MCF 10A (cell line): ENCODE measurements at regions of chr5 and their contacts with region 1.

Region 1: GRCh38 chr5:143968011-143968878 is 156.3 kb downstream of the HMHB1 start:
- DNase-seq: peak; percentile 80
- H3K4me3 Mint-ChIP-seq: no peak overlapping the region
- H3K27ac Mint-ChIP-seq: no peak overlapping the region
- H3K4me1 Mint-ChIP-seq: peaks cover 24% of the 10 kb centered on the region
- H3K27me3 Mint-ChIP-seq: no peaks in the 10 kb centered on the region
- CTCF ChIP-seq: peak; percentile 76

Region 2: DNA sequence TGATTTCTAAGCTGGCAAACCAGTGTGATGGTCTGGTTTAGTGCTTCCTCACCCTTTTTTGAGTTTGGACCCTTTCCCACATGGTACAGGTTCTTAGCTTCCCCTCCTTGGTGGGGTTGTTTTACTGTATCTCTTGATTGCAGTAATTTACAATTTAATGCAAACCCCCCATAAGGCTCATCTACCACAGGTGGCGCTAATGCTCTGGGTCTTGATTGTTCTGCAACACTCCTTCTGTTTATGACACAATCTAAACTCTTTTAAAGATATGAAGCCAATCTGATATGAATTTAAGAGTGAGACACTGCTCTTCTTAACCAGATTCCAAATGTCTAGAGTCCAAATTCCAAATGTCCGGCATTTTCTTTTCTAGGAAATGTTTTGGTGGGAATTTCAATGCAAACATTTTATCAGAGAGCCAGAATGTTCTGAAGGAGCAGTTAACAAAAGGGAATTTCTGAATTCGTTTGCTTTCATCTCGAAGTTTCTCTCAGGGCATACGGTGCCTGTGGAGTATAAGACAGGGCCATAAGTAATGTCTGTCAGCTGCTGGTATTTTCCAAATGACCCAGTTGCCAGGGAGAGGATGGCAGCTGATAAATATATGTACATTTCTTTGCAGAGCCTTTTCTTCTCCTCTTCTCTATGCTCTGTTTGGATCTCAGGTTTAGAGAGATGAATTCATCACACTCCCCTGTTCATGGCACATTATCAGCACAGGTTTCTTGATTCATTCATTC is 951.3 kb before region 1 on chr5:
- CTCF ChIA-PET with region 1: interaction called, 4 read pairs
- POLR2A ChIA-PET with region 1: no interaction called
- intact Hi-C with region 1: loop called (anchors 5 kb)
- DNase-seq: peak; percentile 85
- H3K4me3 Mint-ChIP-seq: no peak overlapping the region
- H3K27ac Mint-ChIP-seq: no peak overlapping the region
- H3K4me1 Mint-ChIP-seq: peaks cover under 1% of the 10 kb centered on the region
- H3K27me3 Mint-ChIP-seq: no peaks in the 10 kb centered on the region
- CTCF ChIP-seq: peak; percentile 83

Region 3: GRCh38 chr5:143106174-143106573 is 862.1 kb before region 1 on chr5:
- CTCF ChIA-PET with region 1: no interaction called
- POLR2A ChIA-PET with region 1: no interaction called
- intact Hi-C with region 1: loop called (anchors 2 kb)
- DNase-seq: peak; percentile 79
- H3K4me3 Mint-ChIP-seq: no peak overlapping the region
- H3K27ac Mint-ChIP-seq: no peak overlapping the region
- H3K4me1 Mint-ChIP-seq: peaks cover 5% of the 10 kb centered on the region
- H3K27me3 Mint-ChIP-seq: no peaks in the 10 kb centered on the region
- CTCF ChIP-seq: peak; percentile 33

Region 4: GRCh38 chr5:143506881-143507551 is 461.2 kb before region 1 on chr5:
- CTCF ChIA-PET with region 1: no interaction called
- POLR2A ChIA-PET with region 1: interaction called, 4 read pairs
- intact Hi-C with region 1: loop called (anchors 10 kb)
- DNase-seq: peak; percentile 98
- H3K4me3 Mint-ChIP-seq: peak overlapping the region; percentile 44
- H3K27ac Mint-ChIP-seq: peak overlapping the region; percentile 84
- H3K4me1 Mint-ChIP-seq: peaks cover 41% of the 10 kb centered on the region
- H3K27me3 Mint-ChIP-seq: no peaks in the 10 kb centered on the region
- CTCF ChIP-seq: peak; percentile 16

Region 5: DNA sequence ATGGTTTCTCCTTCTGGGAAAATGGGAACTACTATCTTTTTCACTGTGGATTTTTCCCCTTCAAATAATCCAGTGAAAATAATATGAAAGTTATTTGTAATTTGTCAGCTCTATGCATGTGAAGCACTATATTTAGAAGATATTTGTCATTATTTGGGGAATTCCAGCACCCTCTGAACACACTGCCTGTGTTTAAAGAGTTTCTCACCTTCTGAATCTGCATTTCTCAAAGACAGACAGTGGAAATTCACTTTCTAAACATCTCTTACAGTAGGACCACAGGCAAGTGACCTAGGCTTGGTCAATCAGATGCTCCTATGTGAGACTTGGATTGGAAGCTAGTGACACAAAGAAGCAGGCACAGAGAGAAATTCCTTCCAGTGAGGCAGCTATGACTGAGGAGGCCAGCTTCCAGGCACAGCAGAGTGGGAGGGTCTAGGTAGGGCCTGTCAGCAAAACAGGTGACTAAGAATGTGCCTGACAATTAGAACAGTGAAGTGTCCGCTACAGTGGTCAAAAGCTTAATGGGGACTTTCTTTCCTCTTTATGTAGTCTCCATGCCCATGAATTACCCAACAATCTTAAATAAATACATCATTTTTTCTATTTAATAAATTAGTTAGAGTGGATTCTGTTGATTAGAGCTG is 10.9 kb after region 1 on chr5:
- CTCF ChIA-PET with region 1: interaction called, 17 read pairs
- POLR2A ChIA-PET with region 1: interaction called, 18 read pairs
- intact Hi-C with region 1: no loop called
- DNase-seq: no peak
- H3K4me3 Mint-ChIP-seq: no peak overlapping the region
- H3K27ac Mint-ChIP-seq: peak overlapping the region; percentile 61
- H3K4me1 Mint-ChIP-seq: peaks cover 20% of the 10 kb centered on the region
- H3K27me3 Mint-ChIP-seq: no peaks in the 10 kb centered on the region
- CTCF ChIP-seq: no peak

Region 6: DNA sequence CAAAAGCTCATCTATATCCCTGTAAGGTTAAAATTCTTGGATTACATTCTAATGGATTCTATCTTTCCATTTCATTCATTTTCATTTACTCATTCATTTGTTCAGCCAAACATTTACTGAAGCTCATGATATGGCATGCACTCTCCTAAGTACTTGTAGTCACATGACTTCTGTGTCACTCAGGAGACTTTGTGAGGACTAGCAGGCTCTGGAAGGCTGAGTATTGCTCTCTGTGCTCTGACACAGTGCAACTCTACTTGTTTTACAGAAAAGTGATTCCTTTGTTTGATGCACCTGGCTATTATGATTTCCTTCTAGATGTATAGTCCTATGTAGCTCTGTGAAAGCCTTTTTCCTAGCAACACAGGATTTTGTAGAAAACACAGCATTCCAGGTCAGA is 149.2 kb after region 1 on chr5:
- CTCF ChIA-PET with region 1: no interaction called
- POLR2A ChIA-PET with region 1: no interaction called
- intact Hi-C with region 1: no loop called
- DNase-seq: no peak
- H3K4me3 Mint-ChIP-seq: no peak overlapping the region
- H3K27ac Mint-ChIP-seq: no peak overlapping the region
- H3K4me1 Mint-ChIP-seq: no peaks in the 10 kb centered on the region
- H3K27me3 Mint-ChIP-seq: no peaks in the 10 kb centered on the region
- CTCF ChIP-seq: no peak

Region 7: DNA sequence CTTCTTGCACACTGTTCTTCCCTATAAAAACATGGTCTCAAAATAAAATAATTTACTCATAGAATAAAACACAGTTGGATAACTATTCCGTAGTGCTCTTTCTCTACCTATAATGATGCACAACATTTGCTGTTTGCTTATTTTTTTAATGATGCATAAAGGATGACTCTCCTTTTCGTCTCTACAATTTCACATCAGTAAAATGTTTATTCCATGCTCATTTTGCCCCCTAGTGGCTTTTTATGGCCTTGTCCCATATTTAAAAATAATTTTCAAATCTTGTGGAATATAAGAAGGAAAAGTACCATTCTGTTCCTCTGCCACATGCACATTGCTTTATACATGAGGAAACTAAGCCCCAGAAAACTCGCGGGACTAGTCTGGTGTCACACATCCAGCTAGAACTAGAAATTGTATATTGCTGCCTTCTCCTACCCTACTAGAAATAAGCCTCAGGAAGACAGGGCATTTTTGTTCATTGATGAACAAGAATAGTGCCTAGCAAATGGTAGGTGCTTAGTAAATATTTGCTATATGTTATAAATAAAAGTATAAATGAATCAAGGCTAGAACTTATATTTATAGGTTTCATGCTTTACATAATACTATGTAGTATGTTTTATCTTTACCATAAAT is 215.1 kb after region 1 on chr5:
- CTCF ChIA-PET with region 1: interaction called, 3 read pairs
- POLR2A ChIA-PET with region 1: no interaction called
- intact Hi-C with region 1: loop called (anchors 5 kb)
- DNase-seq: peak; percentile 64
- H3K4me3 Mint-ChIP-seq: no peak overlapping the region
- H3K27ac Mint-ChIP-seq: no peak overlapping the region
- H3K4me1 Mint-ChIP-seq: peaks cover 14% of the 10 kb centered on the region
- H3K27me3 Mint-ChIP-seq: no peaks in the 10 kb centered on the region
- CTCF ChIP-seq: peak; percentile 74

Region 8: DNA sequence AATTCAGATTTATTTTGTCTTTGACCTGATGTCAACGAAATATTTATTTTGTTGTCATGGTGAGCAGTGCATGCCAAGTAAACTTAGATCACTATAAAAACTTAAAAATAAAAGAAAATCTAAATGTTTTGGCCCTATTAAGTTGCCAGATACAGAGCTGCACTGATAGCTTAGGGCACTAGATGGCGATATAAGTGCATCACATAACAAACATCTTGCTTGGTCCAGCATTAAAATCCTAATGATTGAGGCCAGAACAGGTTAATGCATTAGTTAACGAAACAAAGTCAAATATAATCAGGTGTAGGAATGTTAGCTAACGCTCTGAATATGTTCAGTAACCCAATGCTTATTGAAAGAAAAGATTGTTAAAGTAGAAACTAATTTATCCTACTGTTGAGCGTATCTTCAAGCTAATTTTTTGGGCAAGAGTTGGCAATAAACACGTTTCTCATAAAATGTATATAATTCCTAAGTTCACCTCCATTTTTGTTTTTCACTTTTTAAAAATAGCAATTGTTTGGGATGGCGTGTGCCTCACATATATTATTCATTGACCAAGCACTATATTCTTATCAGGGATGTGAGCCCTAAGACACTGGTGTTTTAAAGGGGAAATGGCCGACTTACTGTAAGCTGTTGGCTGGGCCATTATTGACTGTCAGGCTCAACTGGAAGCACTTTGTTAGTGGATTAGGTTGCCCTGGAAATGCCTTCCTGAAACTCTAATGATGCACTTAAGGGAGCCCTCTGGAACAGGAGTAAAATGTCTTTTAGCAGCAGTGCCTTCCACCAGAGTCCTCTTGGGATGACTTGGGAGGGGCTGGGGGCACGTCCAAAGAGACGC is 235.7 kb after region 1 on chr5:
- CTCF ChIA-PET with region 1: no interaction called
- POLR2A ChIA-PET with region 1: no interaction called
- intact Hi-C with region 1: no loop called
- DNase-seq: peak; percentile 83
- H3K4me3 Mint-ChIP-seq: peak overlapping the region; percentile 22
- H3K27ac Mint-ChIP-seq: no peak overlapping the region
- H3K4me1 Mint-ChIP-seq: peaks cover 15% of the 10 kb centered on the region
- H3K27me3 Mint-ChIP-seq: peaks cover 46% of the 10 kb centered on the region
- CTCF ChIP-seq: peak; percentile 92